ENCODE measurements at regions of chr12 and their contacts with region 1.

Region 1: GRCh38 chr12:120292661-120293531 is at the start of gene RNU4-1:
- DNase-seq: peak; percentile 56
- CTCF ChIP-seq: no peak

Region 2: DNA sequence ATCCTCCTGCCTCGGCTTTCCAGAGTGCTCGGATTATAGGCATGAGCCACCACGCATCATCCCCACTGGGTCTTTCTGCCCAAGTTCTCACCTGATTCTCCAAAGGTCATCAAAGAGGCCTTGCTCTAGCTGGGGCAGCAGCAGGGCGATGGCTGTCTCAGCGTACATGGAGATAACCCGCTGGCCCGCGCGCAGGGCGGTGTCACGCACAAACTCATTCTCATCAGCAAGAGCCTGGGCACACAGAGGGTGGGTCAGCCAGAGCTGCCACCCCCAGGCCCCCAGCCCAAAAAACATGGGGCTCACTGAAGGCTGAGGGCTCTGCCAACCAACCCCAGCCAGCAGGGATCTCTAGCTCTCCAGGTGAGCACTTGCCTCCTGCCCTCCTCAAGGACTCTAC is 148.7 kb before region 1 on chr12:
- CTCF ChIA-PET with region 1: no interaction called
- POLR2A ChIA-PET with region 1: no interaction called
- DNase-seq: no peak
- CTCF ChIP-seq: no peak

Region 3: GRCh38 chr12:120220838-120221575 is 71.9 kb before region 1 on chr12:
- CTCF ChIA-PET with region 1: interaction called, 3 read pairs
- POLR2A ChIA-PET with region 1: interaction called, 52 read pairs
- DNase-seq: no peak
- CTCF ChIP-seq: no peak

Region 4: GRCh38 chr12:120234643-120235368 is 58.1 kb before region 1 on chr12:
- CTCF ChIA-PET with region 1: interaction called, 53 read pairs
- POLR2A ChIA-PET with region 1: interaction called, 11 read pairs
- DNase-seq: no peak
- CTCF ChIP-seq: peak; percentile 9

Region 5: GRCh38 chr12:120265473-120266179 is 27.3 kb before region 1 on chr12 and contains the start of gene PXN:
- CTCF ChIA-PET with region 1: interaction called, 6 read pairs
- POLR2A ChIA-PET with region 1: interaction called, 29 read pairs
- DNase-seq: peak; percentile 96
- CTCF ChIP-seq: peak; percentile 78

Region 6: GRCh38 chr12:120367233-120367923 is 74.5 kb after region 1 on chr12:
- CTCF ChIA-PET with region 1: no interaction called
- POLR2A ChIA-PET with region 1: interaction called, 12 read pairs
- DNase-seq: no peak
- CTCF ChIP-seq: peak; percentile 41